ENCODE measurements at regions of chr6 and their contacts with region 1.

Region 1: DNA sequence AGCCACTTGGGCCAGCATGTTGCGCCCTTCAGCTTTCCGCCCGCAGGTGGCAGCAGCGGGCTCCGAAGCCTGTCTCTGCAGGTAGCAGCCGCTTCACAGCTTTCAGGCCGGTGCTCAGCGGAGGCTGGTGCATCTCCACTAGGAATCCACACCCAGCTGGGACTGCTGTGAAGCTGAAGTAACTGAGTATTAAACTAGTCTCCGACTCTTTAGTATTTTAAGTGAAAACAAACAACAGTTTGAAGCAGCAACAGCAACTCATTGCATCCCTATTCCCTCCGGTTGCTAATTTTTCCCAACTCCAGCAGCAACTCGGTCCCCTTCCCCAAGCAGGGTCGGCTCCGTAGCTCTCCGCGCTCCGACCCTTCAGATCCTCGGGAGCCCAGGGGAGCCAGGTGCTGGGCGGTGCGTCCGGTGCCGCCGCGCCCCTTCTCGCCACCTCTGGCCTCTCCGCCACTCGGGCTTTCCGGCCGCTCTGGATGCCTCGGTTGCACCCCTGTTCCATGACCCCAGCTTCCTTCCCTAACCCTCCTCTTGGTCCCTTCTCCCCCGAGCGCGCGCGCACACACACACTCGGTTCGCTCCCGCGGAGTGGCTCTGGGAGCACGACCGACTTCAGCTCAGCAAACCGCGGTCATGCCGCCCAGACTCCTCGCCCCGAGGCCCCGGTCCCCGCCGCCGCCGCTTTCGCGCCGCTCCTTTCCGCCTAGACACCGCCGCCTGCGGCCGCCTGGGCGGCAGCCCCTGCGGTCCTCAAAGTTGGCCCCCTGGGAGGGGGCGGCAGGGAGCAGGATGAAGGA is 768 bp upstream of the NKAIN2 start:
- DNase-seq: peak; percentile 84
- CTCF ChIP-seq: peak; percentile 96

Region 2: GRCh38 chr6:123777563-123777962 is 25.3 kb before region 1 on chr6:
- CTCF ChIA-PET with region 1: interaction called, 29 read pairs
- POLR2A ChIA-PET with region 1: no interaction called
- DNase-seq: no peak
- CTCF ChIP-seq: peak; percentile 36

Region 3: GRCh38 chr6:123788319-123788718 is 14.6 kb before region 1 on chr6:
- CTCF ChIA-PET with region 1: interaction called, 52 read pairs
- POLR2A ChIA-PET with region 1: no interaction called
- DNase-seq: no peak
- CTCF ChIP-seq: no peak

Region 4: GRCh38 chr6:123841067-123841896 is 38.4 kb after region 1 on chr6:
- CTCF ChIA-PET with region 1: no interaction called
- POLR2A ChIA-PET with region 1: no interaction called
- DNase-seq: no peak
- CTCF ChIP-seq: no peak

Region 5: DNA sequence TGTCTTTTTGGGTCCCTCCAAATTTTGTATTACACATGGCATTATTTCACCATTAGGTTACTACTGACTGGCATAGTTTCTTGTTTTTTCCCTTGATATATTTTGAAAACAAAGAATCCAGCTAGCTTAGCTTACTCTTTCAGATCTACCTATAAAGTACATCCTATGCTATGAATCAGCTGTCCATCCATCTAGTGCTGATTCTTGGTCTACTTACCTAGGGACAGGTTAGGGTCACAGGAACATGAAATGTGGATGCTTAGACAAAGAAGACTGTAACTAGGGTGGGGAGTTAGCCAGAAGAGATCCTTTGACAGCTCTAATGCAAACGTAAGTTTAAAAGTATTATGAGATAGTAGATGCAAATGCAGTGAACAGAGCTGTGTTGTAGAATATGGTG is 92.4 kb after region 1 on chr6:
- CTCF ChIA-PET with region 1: no interaction called
- POLR2A ChIA-PET with region 1: no interaction called
- DNase-seq: no peak
- CTCF ChIP-seq: no peak

Region 6: GRCh38 chr6:123965894-123966293 is 163.0 kb after region 1 on chr6:
- CTCF ChIA-PET with region 1: interaction called, 10 read pairs
- POLR2A ChIA-PET with region 1: no interaction called
- DNase-seq: no peak
- CTCF ChIP-seq: no peak

Region 7: GRCh38 chr6:124066946-124067552 is 264.2 kb after region 1 on chr6:
- CTCF ChIA-PET with region 1: no interaction called
- POLR2A ChIA-PET with region 1: no interaction called
- DNase-seq: no peak
- CTCF ChIP-seq: no peak

Region 8: GRCh38 chr6:125114248-125114858 is 1311.5 kb after region 1 on chr6:
- CTCF ChIA-PET with region 1: interaction called, 12 read pairs
- POLR2A ChIA-PET with region 1: no interaction called
- DNase-seq: peak; percentile 29
- CTCF ChIP-seq: peak; percentile 62